HCT116 (cell line): ENCODE measurements at regions of chr9 and their contacts with region 1.

Region 1: DNA sequence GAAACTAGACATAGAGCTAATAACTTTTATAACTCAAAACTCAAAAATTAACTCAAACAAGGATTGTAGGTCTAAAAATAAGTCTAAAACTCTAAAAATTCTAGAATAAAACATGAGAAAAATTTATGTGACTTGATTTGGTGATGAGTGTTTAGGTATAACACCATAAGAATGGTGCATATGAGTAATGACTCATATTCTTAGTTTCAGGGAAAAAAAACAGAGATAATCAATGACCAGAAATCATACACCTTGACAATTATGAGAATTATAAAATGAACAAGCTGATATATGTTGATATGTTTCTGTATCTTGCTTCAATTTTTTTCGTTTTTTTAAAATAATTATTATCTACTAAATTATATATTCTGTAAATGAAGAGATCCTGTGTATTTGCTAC is 541.2 kb downstream of the PTPRD start:
- DNase-seq: no peak
- ATAC-seq: no peak
- H3K4me3 ChIP-seq: no peak overlapping the region
- H3K27ac ChIP-seq: no peak overlapping the region
- H3K4me1 ChIP-seq: no peaks in the 10 kb centered on the region
- H3K27me3 ChIP-seq: no peaks in the 10 kb centered on the region
- CTCF ChIP-seq: no peak
- POLR2A ChIP-seq: no peak
- RAD21 ChIP-seq: no peak

Region 2: DNA sequence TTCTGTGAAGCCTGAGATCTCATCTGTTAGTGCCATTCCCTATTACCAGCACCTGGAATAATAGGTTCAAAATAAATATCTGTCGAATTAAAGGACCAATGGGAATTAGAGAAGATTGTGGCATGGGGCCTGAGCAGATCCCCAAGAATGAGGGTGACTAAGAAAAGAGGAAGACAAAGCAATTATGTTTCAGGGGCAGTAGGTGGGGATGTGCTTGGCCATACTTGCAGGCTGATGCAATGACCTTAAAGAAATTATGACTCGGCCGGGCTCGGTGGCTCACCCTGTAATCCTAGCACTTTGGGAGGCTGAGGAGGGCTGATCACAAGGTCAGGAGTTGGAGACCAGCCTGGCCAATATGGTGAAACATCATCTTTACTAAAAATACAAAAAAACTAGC is 21.6 kb before region 1 on chr9:
- CTCF ChIA-PET with region 1: no interaction called
- POLR2A ChIA-PET with region 1: no interaction called
- RAD21 ChIA-PET with region 1: no interaction called
- intact Hi-C with region 1: no loop called
- DNase-seq: no peak
- ATAC-seq: no peak
- H3K4me3 ChIP-seq: no peak overlapping the region
- H3K27ac ChIP-seq: no peak overlapping the region
- H3K4me1 ChIP-seq: no peaks in the 10 kb centered on the region
- H3K27me3 ChIP-seq: no peaks in the 10 kb centered on the region
- CTCF ChIP-seq: no peak
- POLR2A ChIP-seq: no peak
- RAD21 ChIP-seq: no peak

Region 3: GRCh38 chr9:10094563-10094962 is 23.0 kb after region 1 on chr9:
- CTCF ChIA-PET with region 1: no interaction called
- POLR2A ChIA-PET with region 1: no interaction called
- RAD21 ChIA-PET with region 1: no interaction called
- intact Hi-C with region 1: loop called (anchors 2 kb)
- DNase-seq: no peak
- ATAC-seq: no peak
- H3K4me3 ChIP-seq: no peak overlapping the region
- H3K27ac ChIP-seq: no peak overlapping the region
- H3K4me1 ChIP-seq: no peaks in the 10 kb centered on the region; a peak in 1 of 4 replicates
- H3K27me3 ChIP-seq: no peaks in the 10 kb centered on the region
- CTCF ChIP-seq: no peak
- POLR2A ChIP-seq: no peak
- RAD21 ChIP-seq: no peak